PC-3 (cell line): ENCODE measurements at regions of chr6 and their contacts with region 1.

Region 1: GRCh38 chr6:137271245-137272183 is 52.3 kb upstream of the IFNGR1 start:
- DNase-seq: peak; percentile 67
- ATAC-seq: 0 out of 2 replicates have a peak, but pooled peaks have one; percentile 43
- H3K4me3 ChIP-seq: no peak overlapping the region
- H3K27ac ChIP-seq: no peak overlapping the region
- H3K4me1 ChIP-seq: no peaks in the 10 kb centered on the region
- H3K27me3 ChIP-seq: no peaks in the 10 kb centered on the region
- CTCF ChIP-seq: peak; percentile 84

Region 2: GRCh38 chr6:137094411-137095008 is 177.0 kb before region 1 on chr6:
- CTCF ChIA-PET with region 1: interaction called, 5 read pairs
- POLR2A ChIA-PET with region 1: no interaction called
- intact Hi-C with region 1: loop called (anchors 2 kb)
- DNase-seq: peak; percentile 83
- ATAC-seq: peak; percentile 81
- H3K4me3 ChIP-seq: no peak overlapping the region
- H3K27ac ChIP-seq: no peak overlapping the region
- H3K4me1 ChIP-seq: 0 out of 2 replicates have a peak, but pooled peaks cover 4% of the 10 kb centered on the region
- H3K27me3 ChIP-seq: no peaks in the 10 kb centered on the region
- CTCF ChIP-seq: peak; percentile 77

Region 3: DNA sequence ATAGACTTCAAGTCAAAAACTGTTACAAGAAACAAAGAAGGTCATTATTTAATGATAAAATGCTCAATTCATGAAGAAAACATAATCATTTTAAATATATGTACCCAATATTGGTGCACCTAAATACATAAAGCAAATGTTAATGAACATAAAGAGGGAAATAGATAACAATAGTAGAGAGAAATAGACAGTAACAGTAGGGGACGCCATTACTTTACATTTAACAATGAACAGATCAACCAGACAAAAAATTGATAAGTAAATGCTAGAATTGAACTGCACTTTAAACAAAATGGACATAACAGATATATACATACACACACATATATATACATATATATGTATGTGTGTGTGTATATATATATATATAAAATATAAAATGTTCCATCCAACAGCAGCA is 135.4 kb before region 1 on chr6:
- CTCF ChIA-PET with region 1: no interaction called
- POLR2A ChIA-PET with region 1: no interaction called
- intact Hi-C with region 1: no loop called
- DNase-seq: peak; percentile 24
- ATAC-seq: no peak
- H3K4me3 ChIP-seq: no peak overlapping the region
- H3K27ac ChIP-seq: no peak overlapping the region
- H3K4me1 ChIP-seq: no peaks in the 10 kb centered on the region
- H3K27me3 ChIP-seq: no peaks in the 10 kb centered on the region
- CTCF ChIP-seq: peak; percentile 43

Region 4: DNA sequence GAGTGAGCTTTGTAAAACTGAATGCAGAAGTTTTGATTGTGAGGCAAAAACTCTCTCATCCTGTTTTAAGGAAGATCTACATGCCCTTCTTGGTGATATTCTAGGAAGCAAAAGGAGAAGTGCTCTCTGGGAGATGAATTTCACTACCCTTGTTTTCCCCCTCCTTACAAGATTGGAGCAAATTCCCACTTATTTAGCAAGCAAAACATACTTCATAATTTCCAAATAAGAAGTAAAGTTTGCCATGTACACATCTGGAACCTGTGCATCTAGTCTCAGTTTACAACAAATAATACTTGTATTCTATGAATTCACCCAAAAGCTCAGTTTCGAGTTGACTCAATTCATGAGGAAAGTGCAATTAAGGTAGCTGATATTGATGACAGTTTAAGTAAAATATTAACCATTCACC is 24.7 kb before region 1 on chr6:
- CTCF ChIA-PET with region 1: interaction called, 10 read pairs
- POLR2A ChIA-PET with region 1: no interaction called
- intact Hi-C with region 1: no loop called
- DNase-seq: no peak
- ATAC-seq: no peak
- H3K4me3 ChIP-seq: no peak overlapping the region
- H3K27ac ChIP-seq: no peak overlapping the region
- H3K4me1 ChIP-seq: peaks cover 4% of the 10 kb centered on the region
- H3K27me3 ChIP-seq: no peaks in the 10 kb centered on the region
- CTCF ChIP-seq: no peak

Region 5: DNA sequence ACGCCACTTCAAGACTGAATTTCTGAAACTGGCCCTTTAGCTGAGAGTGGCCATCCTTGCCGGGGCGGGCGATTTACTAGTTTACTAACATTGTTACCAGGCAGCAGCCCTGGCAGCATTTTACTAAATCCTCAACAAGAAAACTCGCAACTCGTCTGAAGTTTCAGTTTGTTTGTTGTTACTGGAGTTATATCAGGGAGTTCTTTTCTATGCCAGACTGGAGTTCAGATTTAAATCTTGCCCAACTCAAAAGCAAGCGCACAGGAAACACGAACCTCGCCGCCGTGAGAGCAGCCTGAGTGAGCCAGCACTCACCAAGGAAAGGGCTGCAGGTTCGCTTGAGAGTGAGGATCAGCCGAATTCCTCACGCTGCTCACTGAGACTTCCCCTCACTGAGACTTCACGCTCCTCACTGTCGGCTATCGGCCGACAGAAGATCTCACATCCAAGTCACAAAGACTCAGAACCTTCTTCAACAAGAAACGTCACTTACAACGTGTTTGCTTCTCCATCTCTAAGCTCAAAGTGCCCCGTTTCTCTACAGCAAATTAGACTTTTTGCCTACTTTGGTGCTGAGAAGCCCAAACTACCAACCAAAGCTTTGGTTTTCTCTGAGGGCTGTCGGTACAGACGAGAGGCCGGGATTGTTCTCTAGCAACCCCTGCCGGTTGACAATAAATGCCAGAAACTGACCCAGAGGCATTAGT is 143.8 kb after region 1 on chr6:
- CTCF ChIA-PET with region 1: no interaction called
- POLR2A ChIA-PET with region 1: no interaction called
- intact Hi-C with region 1: loop called (anchors 1 kb)
- DNase-seq: peak; percentile 77
- ATAC-seq: peak; percentile 95
- H3K4me3 ChIP-seq: peak overlapping the region; percentile 66
- H3K27ac ChIP-seq: no peak overlapping the region
- H3K4me1 ChIP-seq: no peaks in the 10 kb centered on the region
- H3K27me3 ChIP-seq: peaks cover 15% of the 10 kb centered on the region
- CTCF ChIP-seq: peak; percentile 75